ENCODE measurements at regions of chr2 and their contacts with region 1.

Region 1: DNA sequence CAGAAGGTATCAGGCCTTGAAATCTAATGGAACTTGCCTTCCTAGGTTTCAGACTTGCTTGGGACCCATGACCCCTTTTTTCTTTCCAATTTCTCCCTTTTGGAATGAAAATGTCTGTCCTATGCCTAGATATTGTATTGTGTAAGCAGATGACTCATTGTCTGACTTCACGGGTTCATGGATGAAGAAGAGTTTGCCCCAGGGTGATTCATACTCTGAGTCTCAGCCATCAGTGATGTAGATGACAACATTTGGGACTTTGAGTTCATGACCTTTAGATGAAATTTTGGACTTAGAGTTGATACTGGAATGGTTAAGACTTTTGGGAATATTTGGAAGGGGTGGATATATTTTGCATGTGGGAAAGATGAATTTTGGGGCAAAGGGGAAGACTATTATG is 11.2 kb upstream of the SCYGR5 start:
- DNase-seq: no peak
- H3K4me3 ChIP-seq: no peak overlapping the region
- H3K27ac ChIP-seq: no peak overlapping the region
- H3K4me1 ChIP-seq: no peaks in the 10 kb centered on the region
- H3K27me3 ChIP-seq: no peaks in the 10 kb centered on the region
- CTCF ChIP-seq: no peak
- POLR2A ChIP-seq: no peak

Region 2: GRCh38 chr2:227766373-227766883 is 111.0 kb after region 1 on chr2:
- intact Hi-C with region 1: loop called (anchors 5 kb)
- DNase-seq: no peak
- H3K4me3 ChIP-seq: no peak overlapping the region
- H3K27ac ChIP-seq: no peak overlapping the region
- H3K4me1 ChIP-seq: peaks cover 7% of the 10 kb centered on the region
- H3K27me3 ChIP-seq: no peaks in the 10 kb centered on the region
- CTCF ChIP-seq: peak; percentile 51 to 89 (median 86)
- POLR2A ChIP-seq: no peak